Adrenal gland (tissue), 19 donors: ENCODE measurements at regions of chr6 and their contacts with region 1.

Region 1: DNA sequence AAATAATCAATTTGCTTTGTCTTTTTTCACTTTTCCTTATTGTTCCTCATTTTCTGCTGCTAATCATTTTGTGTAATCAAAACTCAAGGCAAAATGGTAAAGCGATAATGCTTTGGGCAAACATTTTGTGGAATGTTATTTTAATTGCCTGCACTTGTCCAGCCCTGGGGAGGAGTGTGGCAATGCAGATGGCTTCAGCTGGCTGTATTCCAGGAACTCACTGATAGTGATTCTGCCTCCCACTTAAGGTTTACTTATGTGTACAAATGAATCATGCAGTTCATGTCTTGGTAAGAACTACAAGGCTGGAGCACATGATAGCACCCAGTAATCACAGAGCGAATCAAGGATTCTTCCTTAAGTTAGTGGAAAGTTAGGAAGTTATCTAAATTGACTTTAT is 107.8 kb downstream of the COL19A1 start:
- DNase-seq: no peak
- H3K4me3 ChIP-seq: no peak overlapping the region
- H3K27ac ChIP-seq: no peak overlapping the region
- H3K4me1 ChIP-seq: no peaks in the 10 kb centered on the region
- H3K27me3 ChIP-seq: no peaks in the 10 kb centered on the region
- CTCF ChIP-seq: no peak
- POLR2A ChIP-seq: no peak

Region 2: DNA sequence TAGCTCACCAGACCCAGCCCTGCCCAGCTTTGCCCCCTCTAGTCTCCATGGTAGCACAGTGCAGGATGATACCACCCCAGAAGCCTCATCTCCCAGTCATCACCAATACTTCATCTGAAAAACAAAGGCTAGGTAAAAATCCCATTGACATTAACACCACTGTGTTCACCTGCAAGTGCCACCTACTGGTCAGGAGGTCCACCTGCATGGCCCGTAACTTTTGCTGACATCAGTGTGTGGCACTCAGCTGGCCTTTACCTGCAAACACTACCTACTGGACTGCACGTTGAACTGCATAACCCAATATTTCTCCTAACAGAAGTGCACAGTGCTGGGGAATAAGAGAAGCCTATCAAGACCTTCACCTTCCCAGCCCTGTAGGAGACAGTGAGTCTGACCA is 1573.8 kb before region 1 on chr6:
- intact Hi-C with region 1: loop called in 1 of 2 experiments (anchors 10 kb)
- DNase-seq: no peak
- H3K4me3 ChIP-seq: no peak overlapping the region
- H3K27ac ChIP-seq: no peak overlapping the region
- H3K4me1 ChIP-seq: no peaks in the 10 kb centered on the region
- H3K27me3 ChIP-seq: no peaks in the 10 kb centered on the region
- CTCF ChIP-seq: no peak
- POLR2A ChIP-seq: no peak